IMR-90 (cell line): ENCODE measurements at regions of chr1 and their contacts with region 1.

Region 1: GRCh38 chr1:165717918-165718515 is 19.7 kb upstream of the ALDH9A1 start:
- DNase-seq: peak; percentile 71
- ATAC-seq: peak; percentile 92
- H3K4me3 ChIP-seq: no peak overlapping the region
- H3K27ac ChIP-seq: no peak overlapping the region
- H3K4me1 ChIP-seq: no peaks in the 10 kb centered on the region
- H3K27me3 ChIP-seq: no peaks in the 10 kb centered on the region
- CTCF ChIP-seq: peak; percentile 87
- POLR2A ChIP-seq: no peak
- RAD21 ChIP-seq: peak; percentile 94

Region 2: DNA sequence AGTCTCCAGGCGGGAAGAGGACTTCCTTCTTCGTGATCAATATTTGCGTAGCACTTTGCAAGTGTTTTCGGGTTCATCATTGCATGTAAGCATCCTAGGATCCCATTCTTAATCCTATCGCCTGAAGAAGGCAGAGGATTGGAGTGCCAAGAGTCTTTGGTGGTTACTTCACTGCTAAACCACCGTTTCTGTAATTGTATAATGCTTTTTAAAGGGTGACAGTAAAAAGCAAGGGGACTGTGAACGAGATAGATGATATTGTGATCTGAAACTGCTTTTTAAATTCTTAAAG is 19.3 kb before region 1 on chr1:
- CTCF ChIA-PET with region 1: no interaction called
- POLR2A ChIA-PET with region 1: no interaction called
- dilution Hi-C with region 1: no loop called
- in situ Hi-C with region 1: no loop called
- intact Hi-C with region 1: no loop called
- DNase-seq: no peak
- ATAC-seq: no peak
- H3K4me3 ChIP-seq: peak overlapping the region; percentile 70
- H3K27ac ChIP-seq: 0 out of 2 replicates have a peak overlapping the region, but pooled peaks have one; percentile 15
- H3K4me1 ChIP-seq: no peaks in the 10 kb centered on the region
- H3K27me3 ChIP-seq: no peaks in the 10 kb centered on the region
- CTCF ChIP-seq: no peak
- POLR2A ChIP-seq: no peak
- RAD21 ChIP-seq: no peak

Region 3: GRCh38 chr1:165914136-165914798 is 196.2 kb after region 1 on chr1:
- CTCF ChIA-PET with region 1: interaction called, 3 read pairs
- POLR2A ChIA-PET with region 1: no interaction called
- dilution Hi-C with region 1: no loop called
- in situ Hi-C with region 1: loop called (anchors 5 kb)
- intact Hi-C with region 1: loop called (anchors 1 kb)
- DNase-seq: peak; percentile 88
- ATAC-seq: peak; percentile 89
- H3K4me3 ChIP-seq: no peak overlapping the region
- H3K27ac ChIP-seq: no peak overlapping the region
- H3K4me1 ChIP-seq: peaks cover 5% of the 10 kb centered on the region
- H3K27me3 ChIP-seq: no peaks in the 10 kb centered on the region
- CTCF ChIP-seq: peak; percentile 96
- POLR2A ChIP-seq: peak; percentile 57
- RAD21 ChIP-seq: peak; percentile 100

Region 4: DNA sequence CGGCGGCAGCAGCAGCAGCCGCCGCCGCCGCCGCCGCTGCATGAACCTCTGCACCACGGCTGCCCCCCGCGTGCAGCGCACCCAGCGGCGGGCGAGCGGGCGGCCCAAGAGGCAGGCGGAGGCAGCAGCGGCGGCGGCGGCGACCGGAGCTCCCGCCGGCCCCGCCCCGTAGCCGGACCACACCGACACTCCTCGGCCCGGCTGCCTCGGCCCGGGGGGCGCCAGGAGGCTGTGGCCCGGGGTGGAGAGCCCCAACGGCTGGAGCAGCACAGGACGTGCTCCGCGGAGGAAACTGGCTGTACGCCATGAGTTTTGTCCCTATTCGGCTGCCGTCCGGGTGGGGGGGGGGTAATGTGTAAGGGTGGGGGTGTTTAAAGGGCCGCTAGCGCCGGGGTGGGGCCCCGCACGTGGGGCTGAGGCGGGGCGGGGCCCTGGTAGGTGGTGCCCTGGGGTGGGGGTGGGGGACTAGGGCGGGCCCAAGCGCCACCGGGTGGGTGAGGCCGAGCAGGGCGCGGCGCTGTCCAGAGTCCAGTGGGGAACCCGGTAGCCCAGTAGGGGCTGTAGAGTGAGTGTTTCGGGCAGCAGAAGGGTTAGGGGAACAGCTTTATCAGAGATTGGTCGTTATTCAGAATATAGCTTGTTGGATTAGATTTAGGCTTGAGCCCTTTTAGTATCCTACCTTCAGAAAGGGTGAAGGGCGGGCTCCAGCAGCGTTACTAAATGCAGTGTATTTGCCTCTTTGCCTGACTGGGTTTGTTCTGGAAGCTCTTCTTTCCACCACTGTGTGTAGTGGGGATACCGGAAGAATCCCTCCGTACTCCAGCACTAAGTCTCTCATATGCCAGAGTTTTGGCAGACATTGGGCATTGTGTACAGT is 448.9 kb after region 1 on chr1 and contains the start of gene FAM78B:
- CTCF ChIA-PET with region 1: no interaction called
- POLR2A ChIA-PET with region 1: no interaction called
- dilution Hi-C with region 1: no loop called
- in situ Hi-C with region 1: no loop called
- intact Hi-C with region 1: loop called (anchors 1 kb)
- DNase-seq: peak; percentile 7
- ATAC-seq: peak; percentile 65
- H3K4me3 ChIP-seq: peak within 1 kb of the TSS; percentile 83
- H3K27ac ChIP-seq: no peak within 1 kb of the TSS
- H3K4me1 ChIP-seq: no peaks in the 10 kb centered on the region
- H3K27me3 ChIP-seq: peaks cover 13% of the 10 kb centered on the region
- CTCF ChIP-seq: no peak
- POLR2A ChIP-seq: no peak
- RAD21 ChIP-seq: no peak
- total RNA-seq, gene FAM78B: under 0.01 and 0.28 TPM in 2 replicates

Region 5: DNA sequence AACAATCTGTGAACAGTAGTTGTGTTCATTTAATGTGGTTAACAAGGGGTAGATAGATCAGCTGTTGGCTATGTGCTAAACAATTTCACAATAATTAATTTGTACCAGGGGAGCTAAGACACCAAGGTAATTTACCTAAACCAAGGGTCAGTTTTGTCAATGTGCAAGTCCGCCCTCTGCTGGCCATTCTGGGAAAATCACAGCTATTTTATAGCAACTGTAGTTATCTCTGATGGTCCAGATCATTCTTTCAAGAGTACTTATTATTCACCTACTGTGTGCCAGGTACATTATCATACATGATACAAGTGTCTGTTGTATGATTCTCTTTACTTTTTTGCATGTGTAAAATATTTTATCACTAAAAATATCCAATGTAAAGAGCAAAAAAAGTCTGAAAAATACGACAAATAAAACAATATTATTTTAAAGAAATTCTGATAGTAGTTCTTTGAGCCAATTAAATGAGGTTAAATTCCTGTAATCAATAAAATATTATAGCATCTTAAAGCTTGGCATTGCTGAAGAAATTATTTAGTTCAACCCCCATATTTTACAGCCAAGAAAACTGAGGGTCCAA is 761.1 kb after region 1 on chr1:
- CTCF ChIA-PET with region 1: no interaction called
- POLR2A ChIA-PET with region 1: no interaction called
- dilution Hi-C with region 1: no loop called
- in situ Hi-C with region 1: loop called (anchors 5 kb)
- intact Hi-C with region 1: loop called (anchors 1 kb)
- DNase-seq: peak; percentile 18
- ATAC-seq: peak; percentile 44; the same call in 1 of the 2 replicates
- H3K4me3 ChIP-seq: no peak overlapping the region
- H3K27ac ChIP-seq: no peak overlapping the region
- H3K4me1 ChIP-seq: no peaks in the 10 kb centered on the region
- H3K27me3 ChIP-seq: no peaks in the 10 kb centered on the region
- CTCF ChIP-seq: peak; percentile 62
- POLR2A ChIP-seq: no peak
- RAD21 ChIP-seq: peak; percentile 55